MCF 10A (cell line): ENCODE measurements at regions of chr7 and their contacts with region 1.

Region 1: GRCh38 chr7:116271963-116272839 is 61.9 kb downstream of the TES start:
- DNase-seq: peak; percentile 96
- H3K4me3 Mint-ChIP-seq: peak overlapping the region; percentile 58
- H3K27ac Mint-ChIP-seq: peak overlapping the region; percentile 82
- H3K4me1 Mint-ChIP-seq: peaks cover 47% of the 10 kb centered on the region
- H3K27me3 Mint-ChIP-seq: no peaks in the 10 kb centered on the region
- CTCF ChIP-seq: no peak

Region 2: DNA sequence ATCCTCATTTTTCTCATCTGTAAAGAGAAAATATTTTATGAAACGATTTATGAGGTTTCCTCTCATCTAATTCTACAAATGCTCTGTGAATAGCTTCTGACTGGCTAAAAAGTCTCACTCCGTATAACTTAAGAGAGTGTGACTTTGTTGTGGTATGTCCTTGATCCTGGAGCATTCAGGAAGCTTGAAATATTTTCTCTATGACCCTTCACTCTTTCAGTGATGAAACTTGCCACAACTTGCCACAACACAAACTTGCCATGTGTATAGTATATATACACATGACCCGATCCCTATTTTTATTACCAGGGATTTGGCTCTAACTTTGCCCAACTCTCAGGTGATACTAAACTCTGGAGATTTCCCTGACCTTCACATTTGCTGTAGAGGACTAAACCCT is 12.2 kb after region 1 on chr7:
- CTCF ChIA-PET with region 1: interaction called, 3 read pairs
- POLR2A ChIA-PET with region 1: interaction called, 27 read pairs
- intact Hi-C with region 1: no loop called
- DNase-seq: peak; percentile 46
- H3K4me3 Mint-ChIP-seq: no peak overlapping the region
- H3K27ac Mint-ChIP-seq: peak overlapping the region; percentile 90
- H3K4me1 Mint-ChIP-seq: peaks cover 40% of the 10 kb centered on the region
- H3K27me3 Mint-ChIP-seq: no peaks in the 10 kb centered on the region
- CTCF ChIP-seq: no peak

Region 3: DNA sequence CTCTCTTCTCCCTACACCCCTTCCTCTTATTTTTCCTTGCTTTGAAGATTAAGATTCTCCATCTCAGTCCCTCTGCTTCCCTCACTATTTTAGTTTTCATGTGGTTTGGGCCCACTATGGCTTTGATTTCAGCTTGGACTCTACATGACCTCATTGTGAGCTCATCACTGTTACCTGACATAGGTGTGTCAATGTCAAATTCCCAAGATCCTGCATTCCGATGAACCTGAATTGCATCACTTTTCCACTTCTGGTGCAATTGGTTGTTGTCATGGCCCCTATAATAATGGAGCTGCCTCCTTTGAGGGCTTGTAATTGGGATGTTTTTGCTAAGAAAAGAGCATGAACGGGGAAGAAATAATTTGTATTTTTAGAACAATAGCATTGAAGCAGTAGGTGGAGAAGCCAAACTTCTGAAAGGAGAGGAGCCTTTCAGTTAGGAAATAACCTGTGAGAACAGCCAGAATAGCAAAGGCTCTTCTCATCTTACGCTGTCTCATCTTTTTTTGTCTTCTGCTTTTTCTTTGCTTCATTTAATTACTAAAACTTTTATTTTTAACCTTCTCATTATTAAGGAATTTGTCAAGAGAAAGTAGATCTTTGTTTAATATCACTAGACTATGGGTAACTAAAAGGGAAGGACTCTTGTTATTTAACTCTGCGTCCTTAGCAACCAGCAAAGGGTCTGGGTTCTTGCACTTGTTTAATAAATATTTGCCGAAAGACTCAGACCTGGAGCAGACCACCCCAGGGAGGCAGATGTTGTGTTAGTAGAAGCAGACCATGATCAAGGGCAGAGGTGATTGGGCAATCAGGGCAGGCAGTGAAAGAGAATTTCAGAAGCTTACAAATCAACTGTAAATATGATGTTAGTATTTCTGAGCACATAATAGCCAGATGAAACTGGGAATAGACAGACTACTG is 33.5 kb after region 1 on chr7:
- CTCF ChIA-PET with region 1: no interaction called
- POLR2A ChIA-PET with region 1: interaction called, 10 read pairs
- intact Hi-C with region 1: no loop called
- DNase-seq: peak; percentile 16
- H3K4me3 Mint-ChIP-seq: no peak overlapping the region
- H3K27ac Mint-ChIP-seq: no peak overlapping the region
- H3K4me1 Mint-ChIP-seq: peaks cover 11% of the 10 kb centered on the region
- H3K27me3 Mint-ChIP-seq: no peaks in the 10 kb centered on the region
- CTCF ChIP-seq: no peak

Region 4: DNA sequence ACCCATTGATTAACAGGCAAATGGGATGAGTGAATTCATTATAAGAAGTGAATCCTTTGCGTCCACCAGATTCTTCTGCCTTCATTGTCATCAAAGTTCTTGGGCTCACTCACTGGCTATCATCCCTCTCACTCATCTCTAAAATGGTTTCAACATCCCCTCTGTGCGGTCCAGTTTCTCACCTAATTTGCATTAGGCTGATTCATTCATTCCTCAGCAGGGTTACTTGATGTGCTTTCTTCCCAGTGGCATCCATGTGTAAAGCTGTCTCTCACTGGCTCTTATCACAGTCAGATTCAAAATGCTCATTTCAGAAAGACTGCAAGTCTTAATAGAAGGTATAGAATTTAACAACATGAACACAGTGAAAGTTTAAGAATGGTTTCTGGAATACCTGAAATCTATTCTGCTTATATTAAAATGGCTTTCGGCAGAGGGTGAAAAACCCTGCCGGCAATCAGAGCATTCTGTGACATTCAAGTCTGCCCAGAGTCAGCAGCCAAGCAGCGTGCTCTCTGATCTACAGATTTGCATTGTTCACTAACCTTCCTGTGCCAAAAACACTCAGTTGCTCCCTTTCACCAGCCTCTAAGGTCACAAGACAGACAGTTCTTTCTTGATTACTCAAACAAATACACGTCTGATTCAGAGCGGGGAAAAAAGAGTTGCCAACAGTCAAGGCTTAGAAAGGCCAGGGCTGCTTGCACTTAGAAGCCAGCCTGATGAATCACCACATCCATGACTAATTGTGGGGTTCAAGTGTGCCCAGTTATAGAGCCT is 44.8 kb after region 1 on chr7:
- CTCF ChIA-PET with region 1: interaction called, 5 read pairs
- POLR2A ChIA-PET with region 1: interaction called, 47 read pairs
- intact Hi-C with region 1: loop called (anchors 1 kb)
- DNase-seq: peak; percentile 99
- H3K4me3 Mint-ChIP-seq: peak overlapping the region; percentile 42
- H3K27ac Mint-ChIP-seq: peak overlapping the region; percentile 88
- H3K4me1 Mint-ChIP-seq: peaks cover 17% of the 10 kb centered on the region
- H3K27me3 Mint-ChIP-seq: no peaks in the 10 kb centered on the region
- CTCF ChIP-seq: no peak

Region 5: DNA sequence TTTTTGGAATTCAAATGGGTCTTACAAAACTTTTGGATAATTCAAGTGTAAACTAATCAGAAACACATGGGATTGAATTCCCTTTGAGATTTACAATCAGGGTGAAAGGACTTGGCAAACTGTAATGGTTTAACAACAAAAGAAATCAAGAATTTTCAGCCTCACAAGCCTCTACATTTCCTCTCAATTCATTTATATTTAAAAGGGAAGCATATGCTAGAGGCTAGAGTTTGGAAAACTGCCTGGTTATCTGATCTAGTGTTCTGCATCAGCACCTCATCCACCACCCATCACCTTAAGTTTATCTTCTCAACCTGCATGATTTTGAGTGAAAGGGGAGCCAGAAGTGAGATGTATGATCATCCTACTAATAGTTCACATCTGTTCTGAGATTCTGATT is 58.8 kb after region 1 on chr7:
- CTCF ChIA-PET with region 1: no interaction called
- POLR2A ChIA-PET with region 1: no interaction called
- intact Hi-C with region 1: no loop called
- DNase-seq: no peak
- H3K4me3 Mint-ChIP-seq: no peak overlapping the region
- H3K27ac Mint-ChIP-seq: no peak overlapping the region
- H3K4me1 Mint-ChIP-seq: peaks cover 5% of the 10 kb centered on the region
- H3K27me3 Mint-ChIP-seq: no peaks in the 10 kb centered on the region
- CTCF ChIP-seq: no peak

Region 6: GRCh38 chr7:116340943-116341907 is 69.0 kb after region 1 on chr7:
- CTCF ChIA-PET with region 1: interaction called, 3 read pairs
- POLR2A ChIA-PET with region 1: interaction called, 20 read pairs
- intact Hi-C with region 1: no loop called
- DNase-seq: peak; percentile 34
- H3K4me3 Mint-ChIP-seq: no peak overlapping the region
- H3K27ac Mint-ChIP-seq: peak overlapping the region; percentile 86
- H3K4me1 Mint-ChIP-seq: peaks cover 26% of the 10 kb centered on the region
- H3K27me3 Mint-ChIP-seq: no peaks in the 10 kb centered on the region
- CTCF ChIP-seq: peak; percentile 14

Region 7: GRCh38 chr7:116354546-116355408 is 82.6 kb after region 1 on chr7:
- CTCF ChIA-PET with region 1: interaction called, 4 read pairs
- POLR2A ChIA-PET with region 1: interaction called, 18 read pairs
- intact Hi-C with region 1: loop called (anchors 1 kb)
- DNase-seq: peak; percentile 91
- H3K4me3 Mint-ChIP-seq: peak overlapping the region; percentile 69
- H3K27ac Mint-ChIP-seq: peak overlapping the region; percentile 98
- H3K4me1 Mint-ChIP-seq: peaks cover 42% of the 10 kb centered on the region
- H3K27me3 Mint-ChIP-seq: no peaks in the 10 kb centered on the region
- CTCF ChIP-seq: no peak

Region 8: DNA sequence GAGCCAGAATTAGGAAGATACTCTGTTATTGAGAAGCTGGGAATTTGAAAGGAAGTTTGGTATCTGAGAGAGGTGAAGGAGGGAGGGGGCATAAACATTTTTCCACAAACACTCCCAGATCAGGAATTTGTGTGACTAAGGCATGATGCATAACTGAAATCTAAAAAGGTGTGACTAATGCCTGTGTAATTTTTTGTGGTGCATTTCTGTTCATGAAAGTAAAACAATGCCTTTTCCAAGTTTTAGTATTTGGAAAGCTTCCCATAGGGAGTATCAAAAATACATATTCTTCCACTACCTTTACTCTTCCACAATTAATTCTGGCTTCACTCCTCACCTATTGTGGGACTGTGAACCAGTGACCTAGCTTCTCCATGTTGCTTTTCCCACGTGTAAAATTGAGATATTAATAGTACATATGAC is 170.9 kb after region 1 on chr7:
- CTCF ChIA-PET with region 1: interaction called, 3 read pairs
- POLR2A ChIA-PET with region 1: interaction called, 16 read pairs
- intact Hi-C with region 1: no loop called
- DNase-seq: peak; percentile 93
- H3K4me3 Mint-ChIP-seq: peak overlapping the region; percentile 6
- H3K27ac Mint-ChIP-seq: peak overlapping the region; percentile 93
- H3K4me1 Mint-ChIP-seq: peaks cover 38% of the 10 kb centered on the region
- H3K27me3 Mint-ChIP-seq: no peaks in the 10 kb centered on the region
- CTCF ChIP-seq: no peak